ENCODE measurements at regions of chr20 and their contacts with region 1.

Region 1: DNA sequence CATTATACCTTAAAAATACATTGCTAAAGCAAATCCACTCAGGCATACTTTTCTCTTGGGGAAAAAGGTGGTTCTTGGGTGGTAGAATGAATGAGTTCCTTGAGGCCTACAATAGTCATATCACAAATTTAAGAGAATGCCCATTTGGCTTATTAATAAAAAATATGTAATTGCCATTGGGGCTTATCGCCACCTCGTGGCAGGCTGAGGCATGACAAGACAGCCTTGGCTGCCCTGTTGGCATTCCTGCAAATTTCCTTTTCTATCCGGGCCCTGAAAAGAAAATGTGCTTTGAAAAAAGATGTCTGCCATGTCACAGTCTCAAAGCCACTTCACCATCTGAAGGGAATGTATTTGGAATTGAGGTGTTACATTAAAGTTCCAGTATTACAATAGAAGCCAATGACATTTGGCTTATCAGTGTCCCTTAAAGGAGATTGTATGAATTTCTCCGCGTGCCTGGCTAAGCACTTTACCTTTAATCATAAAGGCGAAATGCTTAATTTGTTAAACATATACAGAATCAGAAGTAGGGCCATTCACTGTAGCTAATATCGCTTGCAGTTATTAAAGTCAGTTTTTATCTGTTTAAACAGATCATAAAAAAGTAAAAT is 188.3 kb upstream of the ZFP64 start:
- DNase-seq: peak in 12 of 14 experiments; percentile 9 to 60 (median 26)
- ATAC-seq: no peak
- H3K4me3 ChIP-seq: no peak overlapping the region
- H3K4me3 Mint-ChIP-seq: no peak overlapping the region
- H3K27ac ChIP-seq: no peak overlapping the region
- H3K27ac Mint-ChIP-seq: no peak overlapping the region
- H3K4me1 ChIP-seq: peaks cover 4% of the 10 kb centered on the region
- H3K4me1 Mint-ChIP-seq: peaks cover 26% of the 10 kb centered on the region
- H3K27me3 ChIP-seq: no peaks in the 10 kb centered on the region
- H3K27me3 Mint-ChIP-seq: no peaks in the 10 kb centered on the region
- CTCF ChIP-seq: peak; percentile 95

Region 2: GRCh38 chr20:52150440-52151258 is 229.2 kb before region 1 on chr20:
- CTCF ChIA-PET with region 1: no interaction called
- POLR2A ChIA-PET with region 1: no interaction called
- intact Hi-C with region 1: no loop called
- DNase-seq: peak in 5 of 14 experiments; percentile 3 to 58 (median 41)
- ATAC-seq: peak; percentile 39
- H3K4me3 ChIP-seq: no peak overlapping the region
- H3K4me3 Mint-ChIP-seq: no peak overlapping the region
- H3K27ac ChIP-seq: no peak overlapping the region
- H3K27ac Mint-ChIP-seq: no peak overlapping the region
- H3K4me1 ChIP-seq: no peaks in the 10 kb centered on the region
- H3K4me1 Mint-ChIP-seq: no peaks in the 10 kb centered on the region
- H3K27me3 ChIP-seq: no peaks in the 10 kb centered on the region
- H3K27me3 Mint-ChIP-seq: no peaks in the 10 kb centered on the region
- CTCF ChIP-seq: peak; percentile 98

Region 3: GRCh38 chr20:52242237-52243230 is 137.3 kb before region 1 on chr20:
- CTCF ChIA-PET with region 1: no interaction called
- POLR2A ChIA-PET with region 1: no interaction called
- intact Hi-C with region 1: loop called in 1 of 2 experiments (anchors 10 kb)
- DNase-seq: peak in 3 of 14 experiments; percentile 12 to 42 (median 34)
- ATAC-seq: no peak
- H3K4me3 ChIP-seq: no peak overlapping the region
- H3K4me3 Mint-ChIP-seq: no peak overlapping the region
- H3K27ac ChIP-seq: no peak overlapping the region
- H3K27ac Mint-ChIP-seq: no peak overlapping the region
- H3K4me1 ChIP-seq: no peaks in the 10 kb centered on the region
- H3K4me1 Mint-ChIP-seq: peaks cover 5% of the 10 kb centered on the region
- H3K27me3 ChIP-seq: no peaks in the 10 kb centered on the region
- H3K27me3 Mint-ChIP-seq: peaks cover 7% of the 10 kb centered on the region
- CTCF ChIP-seq: peak; percentile 83

Region 4: DNA sequence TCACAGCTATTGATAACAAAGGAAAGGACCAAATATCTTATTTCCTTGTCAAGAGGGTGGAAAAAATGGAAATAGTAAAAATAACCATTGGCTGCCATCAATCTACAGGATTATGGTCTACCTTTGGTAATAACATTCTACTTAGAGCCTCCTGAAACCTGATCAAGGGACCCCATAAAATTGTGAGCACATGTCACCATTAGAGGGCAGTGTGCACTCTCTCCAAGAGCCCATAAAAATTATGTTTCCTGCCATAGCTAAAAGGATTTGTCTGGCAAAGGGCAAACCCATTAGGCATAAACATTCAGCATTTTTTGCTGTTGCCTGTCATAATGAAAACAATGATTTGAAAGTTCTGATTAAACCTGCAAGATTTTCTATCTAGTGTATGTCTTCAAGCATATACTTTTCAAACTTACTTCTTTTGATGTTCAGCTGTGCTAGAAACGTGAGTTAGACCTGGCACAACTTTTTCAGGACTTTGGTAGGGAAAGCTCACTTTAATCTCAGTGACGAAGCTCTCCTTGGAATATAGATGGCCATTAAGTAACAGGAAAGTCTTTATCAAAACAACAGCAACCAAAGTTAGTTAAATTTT is 67.6 kb before region 1 on chr20:
- CTCF ChIA-PET with region 1: no interaction called
- POLR2A ChIA-PET with region 1: no interaction called
- intact Hi-C with region 1: loop called (anchors 5 to 10 kb)
- DNase-seq: peak in 13 of 14 experiments; percentile 20 to 83 (median 47)
- ATAC-seq: peak; percentile 73
- H3K4me3 ChIP-seq: no peak overlapping the region
- H3K4me3 Mint-ChIP-seq: no peak overlapping the region
- H3K27ac ChIP-seq: no peak overlapping the region
- H3K27ac Mint-ChIP-seq: no peak overlapping the region
- H3K4me1 ChIP-seq: peaks cover 4% of the 10 kb centered on the region
- H3K4me1 Mint-ChIP-seq: peaks cover 38% of the 10 kb centered on the region
- H3K27me3 ChIP-seq: no peaks in the 10 kb centered on the region
- H3K27me3 Mint-ChIP-seq: no peaks in the 10 kb centered on the region
- CTCF ChIP-seq: peak; percentile 88

Region 5: DNA sequence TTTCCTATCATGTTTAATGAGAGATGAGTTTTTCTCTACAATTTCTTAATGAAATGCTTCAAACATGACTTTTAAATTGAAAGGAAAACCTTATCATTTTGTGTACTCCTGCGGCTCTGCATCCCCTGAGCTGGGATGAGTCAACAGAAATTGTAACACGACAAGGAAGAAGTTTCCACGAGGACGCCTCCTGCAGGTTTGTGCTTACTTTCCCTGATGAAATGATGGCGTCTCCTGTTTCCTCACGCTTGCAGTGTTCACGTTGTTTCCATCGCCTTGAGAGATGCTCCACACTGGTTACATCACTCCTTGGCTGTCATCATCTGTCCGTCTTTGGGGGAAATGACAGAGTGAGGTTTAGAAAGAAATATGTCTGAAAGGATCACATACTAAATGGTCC is 45.4 kb after region 1 on chr20:
- CTCF ChIA-PET with region 1: no interaction called
- POLR2A ChIA-PET with region 1: no interaction called
- intact Hi-C with region 1: loop called in 1 of 2 experiments (anchors 5 kb)
- DNase-seq: no peak
- ATAC-seq: no peak
- H3K4me3 ChIP-seq: no peak overlapping the region
- H3K4me3 Mint-ChIP-seq: no peak overlapping the region
- H3K27ac ChIP-seq: no peak overlapping the region
- H3K27ac Mint-ChIP-seq: no peak overlapping the region
- H3K4me1 ChIP-seq: no peaks in the 10 kb centered on the region
- H3K4me1 Mint-ChIP-seq: peaks cover 6% of the 10 kb centered on the region
- H3K27me3 ChIP-seq: no peaks in the 10 kb centered on the region
- H3K27me3 Mint-ChIP-seq: no peaks in the 10 kb centered on the region
- CTCF ChIP-seq: no peak